Mammary epithelial cell (primary cell): ENCODE measurements at regions of chr22 and their contacts with region 1.

Region 1: GRCh38 chr22:46666577-46667244 is 46.5 kb downstream of the GRAMD4 start:
- DNase-seq: no peak
- H3K4me3 ChIP-seq: no peak overlapping the region
- H3K27ac ChIP-seq: no peak overlapping the region
- H3K4me1 ChIP-seq: peaks cover 6% of the 10 kb centered on the region
- H3K27me3 ChIP-seq: no peaks in the 10 kb centered on the region
- CTCF ChIP-seq: no peak

Region 2: GRCh38 chr22:46587492-46588278 is 79.0 kb before region 1 on chr22:
- CTCF ChIA-PET with region 1: no interaction called
- dilution Hi-C with region 1: loop called (anchors 5 kb)
- in situ Hi-C with region 1: no loop called
- intact Hi-C with region 1: no loop called
- DNase-seq: no peak
- H3K4me3 ChIP-seq: no peak overlapping the region
- H3K27ac ChIP-seq: no peak overlapping the region
- H3K4me1 ChIP-seq: peaks cover 9% of the 10 kb centered on the region
- H3K27me3 ChIP-seq: no peaks in the 10 kb centered on the region
- CTCF ChIP-seq: no peak

Region 3: DNA sequence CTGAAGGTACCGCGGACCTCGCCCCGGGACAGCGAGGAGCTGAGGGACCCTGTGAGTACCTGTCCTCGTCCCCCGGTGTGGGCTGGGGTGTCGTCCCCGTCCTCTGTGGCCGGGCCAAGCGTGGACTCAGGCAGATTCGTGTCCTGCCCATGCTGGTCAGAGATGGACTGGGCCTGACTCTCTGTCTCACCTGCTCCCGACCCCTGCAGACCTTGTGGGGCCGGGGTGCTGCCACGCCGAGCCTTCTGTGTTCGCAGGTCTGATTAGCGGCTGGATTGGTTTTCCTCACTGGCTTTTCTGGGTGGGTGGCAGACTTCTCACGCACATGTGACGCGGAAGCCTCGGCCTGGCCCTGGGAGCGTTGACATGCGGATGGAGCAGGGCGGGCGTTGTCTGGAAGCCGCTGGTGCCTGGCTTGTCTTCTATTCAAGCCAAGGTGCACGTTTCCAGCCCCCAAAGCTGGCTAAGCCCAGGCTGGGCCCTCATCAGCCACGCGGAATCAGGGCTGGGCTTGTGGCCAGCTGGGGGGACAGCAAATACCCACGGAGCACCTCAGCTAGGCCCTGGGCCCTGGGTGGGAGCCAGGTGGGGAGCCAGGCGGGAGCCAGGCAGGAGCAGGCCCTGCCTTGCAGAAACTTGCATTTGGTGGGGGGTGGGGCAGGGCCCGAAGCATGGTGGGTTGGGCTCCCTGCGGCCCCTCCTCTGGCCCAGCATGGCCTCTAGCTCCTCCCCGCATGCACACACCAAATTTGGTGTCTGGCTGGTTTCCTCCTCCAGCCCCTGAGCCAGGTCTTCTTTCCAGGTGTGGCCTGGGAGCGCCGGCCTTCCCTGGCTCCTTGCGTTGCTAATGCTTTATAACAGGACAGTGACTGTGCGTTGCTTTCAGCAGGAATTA is 39.6 kb before region 1 on chr22:
- CTCF ChIA-PET with region 1: no interaction called
- dilution Hi-C with region 1: no loop called
- in situ Hi-C with region 1: no loop called
- intact Hi-C with region 1: no loop called
- DNase-seq: peak; percentile 81
- H3K4me3 ChIP-seq: peak overlapping the region in 1 of 3 experiments; percentile 16
- H3K27ac ChIP-seq: peak overlapping the region; percentile 21
- H3K4me1 ChIP-seq: peaks cover 36% of the 10 kb centered on the region
- H3K27me3 ChIP-seq: no peaks in the 10 kb centered on the region
- CTCF ChIP-seq: no peak

Region 4: GRCh38 chr22:46845296-46846149 is 178.8 kb after region 1 on chr22:
- CTCF ChIA-PET with region 1: no interaction called
- dilution Hi-C with region 1: no loop called
- in situ Hi-C with region 1: no loop called
- intact Hi-C with region 1: no loop called
- DNase-seq: no peak
- H3K4me3 ChIP-seq: peak overlapping the region in 2 of 3 experiments; percentile 29 to 32
- H3K27ac ChIP-seq: peak overlapping the region; percentile 47
- H3K4me1 ChIP-seq: peaks cover 46% of the 10 kb centered on the region
- H3K27me3 ChIP-seq: no peaks in the 10 kb centered on the region
- CTCF ChIP-seq: peak; percentile 39 to 55